Activated CD4-positive, alpha-beta T cell treated with anti-CD3 and anti-CD28 coated beads, Interleukin-2, amount 10 ng/mL, durations not matched to agents 24 days and 14 days (primary cell): ENCODE measurements at regions of chr1 and their contacts with region 1.

Region 1: GRCh38 chr1:32291708-32292492 is at the start of gene HDAC1:
- DNase-seq: peak; percentile 99
- H3K4me3 Mint-ChIP-seq: peak within 1 kb of the TSS; percentile 97
- H3K27ac Mint-ChIP-seq: peak within 1 kb of the TSS; percentile 99
- H3K4me1 Mint-ChIP-seq: peaks cover 31% of the 10 kb centered on the region
- H3K27me3 Mint-ChIP-seq: no peaks in the 10 kb centered on the region
- total RNA-seq, gene HDAC1: 181 and 184 TPM in 2 replicates

Region 2: DNA sequence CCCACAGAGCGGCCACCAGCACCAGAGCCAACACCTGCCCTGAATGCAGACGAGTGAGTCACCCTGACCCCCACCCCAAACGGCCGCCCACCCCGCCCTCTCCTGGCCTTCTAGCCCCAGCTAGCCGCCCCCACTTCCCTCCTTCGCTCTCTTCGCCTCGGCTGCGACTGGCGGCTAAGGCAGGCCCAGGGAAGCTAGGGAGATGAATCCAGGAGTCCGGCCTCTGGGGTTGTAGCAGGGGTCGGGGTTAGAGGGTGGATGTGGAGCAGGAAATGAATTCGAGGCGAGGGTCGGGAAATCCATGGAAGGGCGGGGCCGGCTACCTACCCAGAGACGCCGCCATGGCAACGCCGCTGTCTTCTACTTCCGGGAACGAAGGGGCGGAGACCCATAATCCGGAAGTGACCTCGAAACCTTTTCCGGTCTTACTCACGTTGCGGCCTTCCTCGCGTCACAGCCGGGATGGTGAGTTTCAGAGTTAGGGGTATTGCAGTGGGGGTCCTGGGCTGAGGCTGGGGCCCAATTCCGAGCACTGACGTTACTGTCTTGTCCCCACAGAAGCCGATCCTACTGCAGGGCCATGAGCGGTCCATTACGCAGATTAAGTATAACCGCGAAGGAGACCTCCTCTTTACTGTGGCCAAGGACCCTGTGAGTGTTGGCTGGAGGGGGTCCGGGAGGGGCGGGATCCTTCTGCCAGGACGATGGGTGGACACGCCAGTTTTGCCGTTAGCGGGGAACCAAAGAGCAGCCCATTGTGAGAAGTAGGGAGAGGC is 69.7 kb before region 1 on chr1 and contains the starts of genes EIF3I and TMEM234:
- intact Hi-C with region 1: loop called (anchors 1 kb)
- DNase-seq: peak; percentile 98
- H3K4me3 Mint-ChIP-seq: peak within 1 kb of the TSS; percentile 94
- H3K27ac Mint-ChIP-seq: peak within 1 kb of the TSS; percentile 95
- H3K4me1 Mint-ChIP-seq: peaks cover 29% of the 10 kb centered on the region
- H3K27me3 Mint-ChIP-seq: no peaks in the 10 kb centered on the region
- total RNA-seq, gene EIF3I: 304 and 341 TPM in 2 replicates
- total RNA-seq, gene TMEM234: 10.6 and 10.9 TPM in 2 replicates

Region 3: GRCh38 chr1:32273388-32274208 is 18.3 kb before region 1 on chr1:
- intact Hi-C with region 1: loop called (anchors 2 kb)
- DNase-seq: peak; percentile 88
- H3K4me3 Mint-ChIP-seq: peak overlapping the region; percentile 88
- H3K27ac Mint-ChIP-seq: peak overlapping the region; percentile 86
- H3K4me1 Mint-ChIP-seq: peaks cover 56% of the 10 kb centered on the region
- H3K27me3 Mint-ChIP-seq: no peaks in the 10 kb centered on the region

Region 4: GRCh38 chr1:32351399-32352238 is 59.7 kb after region 1 on chr1:
- intact Hi-C with region 1: loop called (anchors 1 kb)
- DNase-seq: peak; percentile 98
- H3K4me3 Mint-ChIP-seq: peak overlapping the region; percentile 86
- H3K27ac Mint-ChIP-seq: peak overlapping the region; percentile 65
- H3K4me1 Mint-ChIP-seq: peaks cover 30% of the 10 kb centered on the region
- H3K27me3 Mint-ChIP-seq: peaks cover 2% of the 10 kb centered on the region

Region 5: GRCh38 chr1:32394141-32394889 is 102.4 kb after region 1 on chr1 and contains the start of gene BSDC1:
- intact Hi-C with region 1: loop called (anchors 2 kb)
- DNase-seq: peak; percentile 100
- H3K4me3 Mint-ChIP-seq: peak within 1 kb of the TSS; percentile 94
- H3K27ac Mint-ChIP-seq: peak within 1 kb of the TSS; percentile 99
- H3K4me1 Mint-ChIP-seq: peaks cover 21% of the 10 kb centered on the region
- H3K27me3 Mint-ChIP-seq: peaks cover 4% of the 10 kb centered on the region
- total RNA-seq, gene BSDC1: 44.8 and 49.5 TPM in 2 replicates